ENCODE measurements at regions of chr2 and their contacts with region 1.

Region 1: DNA sequence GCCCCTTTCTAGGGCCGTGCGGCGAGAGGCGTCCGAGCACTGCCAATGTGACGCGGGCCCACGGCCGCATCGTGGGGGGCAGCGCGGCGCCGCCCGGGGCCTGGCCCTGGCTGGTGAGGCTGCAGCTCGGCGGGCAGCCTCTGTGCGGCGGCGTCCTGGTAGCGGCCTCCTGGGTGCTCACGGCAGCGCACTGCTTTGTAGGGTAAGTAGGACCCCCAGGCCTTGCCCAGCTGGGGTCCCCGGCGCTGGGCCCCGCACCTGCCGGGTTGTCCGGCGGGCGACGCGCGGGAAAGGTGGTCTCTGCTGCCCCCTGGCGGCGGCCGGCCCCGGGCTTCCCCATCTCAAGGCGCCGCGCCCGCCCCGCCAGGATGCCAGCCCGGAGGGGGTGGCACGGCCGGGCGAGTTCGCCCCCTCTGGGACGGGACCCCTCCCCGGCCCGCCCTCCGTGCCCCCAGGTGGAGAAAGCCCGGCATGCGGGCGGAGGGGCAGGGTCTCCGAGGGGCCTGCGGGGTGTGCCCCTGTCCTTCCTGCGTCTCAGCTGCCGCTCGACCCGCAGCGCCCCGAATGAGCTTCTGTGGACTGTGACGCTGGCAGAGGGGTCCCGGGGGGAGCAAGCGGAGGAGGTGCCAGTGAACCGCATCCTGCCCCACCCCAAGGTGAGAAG is 1.9 kb downstream of the PRSS56 start:
- DNase-seq: peak; percentile 50
- H3K4me3 ChIP-seq: no peak overlapping the region
- H3K27ac ChIP-seq: no peak overlapping the region
- H3K4me1 ChIP-seq: no peaks in the 10 kb centered on the region
- CTCF ChIP-seq: peak; percentile 80

Region 2: GRCh38 chr2:232327105-232328041 is 194.7 kb before region 1 on chr2:
- CTCF ChIA-PET with region 1: no interaction called
- POLR2A ChIA-PET with region 1: no interaction called
- intact Hi-C with region 1: loop called (anchors 5 kb)
- DNase-seq: peak; percentile 67
- H3K4me3 ChIP-seq: no peak overlapping the region
- H3K27ac ChIP-seq: no peak overlapping the region
- H3K4me1 ChIP-seq: peaks cover 14% of the 10 kb centered on the region
- CTCF ChIP-seq: peak; percentile 78

Region 3: DNA sequence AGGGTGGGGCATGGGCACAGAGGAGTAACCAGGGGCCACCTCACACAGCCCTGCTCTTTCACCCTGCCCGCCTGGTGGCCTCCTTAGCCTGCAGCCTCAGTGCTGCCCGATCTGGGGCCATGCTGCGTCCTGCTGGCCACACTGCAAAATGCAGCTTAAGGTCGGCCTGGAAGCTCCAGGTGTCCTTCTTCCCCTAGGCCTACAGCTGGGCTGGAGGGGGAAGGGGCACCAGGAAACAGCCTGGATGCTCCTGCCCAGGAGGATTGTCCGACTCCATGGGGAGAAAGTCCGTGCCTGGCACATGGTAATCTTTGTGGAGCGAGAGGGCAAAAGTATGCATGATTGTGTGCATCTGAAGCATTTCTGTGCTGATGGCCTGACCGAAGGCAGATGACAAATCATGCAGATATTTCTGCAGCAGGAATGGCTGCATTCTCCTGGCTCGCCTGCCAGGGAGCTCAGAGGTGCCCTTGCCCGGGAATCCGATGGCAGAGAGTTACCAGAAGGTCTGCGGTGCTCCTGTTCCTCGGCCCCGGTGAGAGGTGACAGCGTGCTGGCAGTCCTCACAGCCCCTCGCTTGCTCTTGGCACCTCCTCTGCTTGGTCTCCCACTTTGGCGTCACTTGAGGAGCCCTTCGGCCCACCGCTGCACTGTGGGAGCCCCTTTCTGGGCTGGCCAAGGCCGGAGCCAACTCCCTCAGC is 156.3 kb before region 1 on chr2:
- CTCF ChIA-PET with region 1: no interaction called
- POLR2A ChIA-PET with region 1: no interaction called
- intact Hi-C with region 1: loop called (anchors 10 kb)
- DNase-seq: peak; percentile 21
- H3K4me3 ChIP-seq: no peak overlapping the region
- H3K27ac ChIP-seq: no peak overlapping the region
- H3K4me1 ChIP-seq: peaks cover 23% of the 10 kb centered on the region
- CTCF ChIP-seq: peak; percentile 33; the same call in 1 of the 2 replicates

Region 4: DNA sequence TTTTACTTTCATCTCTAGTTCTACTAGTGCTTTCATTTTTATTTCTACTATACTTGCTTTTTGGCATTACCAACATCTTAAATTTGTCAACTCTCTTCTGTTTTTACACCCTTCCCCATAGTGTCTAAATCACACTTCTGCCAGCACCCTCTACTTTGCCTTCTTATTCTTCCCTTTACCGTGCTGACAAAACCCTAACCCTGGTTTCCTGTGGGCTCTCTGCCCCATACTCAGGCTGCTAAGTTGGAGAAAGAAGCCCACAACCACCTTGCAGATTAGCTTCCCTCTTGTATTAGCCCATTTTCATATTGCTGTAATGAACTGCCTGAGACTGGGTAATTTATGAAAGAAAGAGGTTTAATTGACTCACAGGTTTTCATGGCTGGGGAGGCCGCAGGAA is 199.8 kb after region 1 on chr2:
- CTCF ChIA-PET with region 1: no interaction called
- POLR2A ChIA-PET with region 1: no interaction called
- intact Hi-C with region 1: no loop called
- DNase-seq: no peak
- H3K4me3 ChIP-seq: no peak overlapping the region
- H3K27ac ChIP-seq: no peak overlapping the region
- H3K4me1 ChIP-seq: no peaks in the 10 kb centered on the region
- CTCF ChIP-seq: no peak

Measured in OCI-LY7 (cell line).